ENCODE measurements at regions of chr21 and their contacts with region 1.

Region 1: GRCh38 chr21:30044445-30045064 is 104.8 kb upstream of the GRIK1 start:
- DNase-seq: no peak
- H3K4me3 ChIP-seq: no peak overlapping the region
- H3K27ac ChIP-seq: no peak overlapping the region
- H3K4me1 ChIP-seq: no peaks in the 10 kb centered on the region
- H3K27me3 ChIP-seq: no peaks in the 10 kb centered on the region
- CTCF ChIP-seq: peak in 5 of 6 experiments; percentile 74 to 86 (median 84)
- POLR2A ChIP-seq: no peak

Region 2: GRCh38 chr21:29571949-29572348 is 472.6 kb before region 1 on chr21:
- intact Hi-C with region 1: no loop called
- DNase-seq: no peak
- H3K4me3 ChIP-seq: no peak overlapping the region
- H3K27ac ChIP-seq: no peak overlapping the region
- H3K4me1 ChIP-seq: no peaks in the 10 kb centered on the region
- H3K27me3 ChIP-seq: no peaks in the 10 kb centered on the region
- CTCF ChIP-seq: no peak
- POLR2A ChIP-seq: no peak

Region 3: GRCh38 chr21:30194701-30195299 is 150.2 kb after region 1 on chr21:
- intact Hi-C with region 1: loop called (anchors 10 kb)
- DNase-seq: no peak
- H3K4me3 ChIP-seq: no peak overlapping the region
- H3K27ac ChIP-seq: no peak overlapping the region
- H3K4me1 ChIP-seq: no peaks in the 10 kb centered on the region
- H3K27me3 ChIP-seq: no peaks in the 10 kb centered on the region
- CTCF ChIP-seq: peak in 5 of 6 experiments; percentile 26 to 65 (median 61)
- POLR2A ChIP-seq: no peak

Measured in thyroid gland (tissue), 4 donors.